Dorsolateral prefrontal cortex (tissue), 120 donors: ENCODE measurements at regions of chr2 and their contacts with region 1.

Region 1: GRCh38 chr2:168107322-168107721 is 140.1 kb downstream of the STK39 start:
- DNase-seq: no peak
- H3K4me3 ChIP-seq: no peak overlapping the region
- H3K27ac ChIP-seq: no peak overlapping the region
- H3K27me3 ChIP-seq: no peaks in the 10 kb centered on the region
- CTCF ChIP-seq: no peak

Region 2: DNA sequence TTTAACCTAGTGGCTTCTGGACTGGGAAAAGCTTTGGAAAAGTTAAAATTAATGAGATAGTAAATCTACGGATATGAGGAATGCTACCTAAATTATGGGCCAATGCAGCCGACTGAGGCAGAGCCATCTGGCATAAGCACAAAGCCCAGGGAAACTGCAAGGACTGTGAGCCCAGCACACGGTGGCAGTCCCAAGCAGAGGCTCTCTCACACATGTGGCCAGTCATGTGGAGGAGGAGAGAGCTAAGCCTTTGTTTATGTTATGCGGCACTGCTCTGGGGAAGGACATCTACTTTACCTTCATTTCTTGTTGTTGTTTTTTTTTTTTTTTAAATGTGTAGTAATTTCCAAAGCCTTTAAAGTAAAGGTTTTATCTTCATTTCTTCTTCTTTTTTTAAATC is 126.9 kb before region 1 on chr2:
- intact Hi-C with region 1: loop called in 1 of 2 experiments (anchors 5 kb)
- DNase-seq: peak in 1 of 10 donors; percentile 33
- H3K4me3 ChIP-seq: no peak overlapping the region
- H3K27ac ChIP-seq: no peak overlapping the region
- H3K27me3 ChIP-seq: no peaks in the 10 kb centered on the region
- CTCF ChIP-seq: no peak

Region 3: GRCh38 chr2:168300460-168300859 is 193.1 kb after region 1 on chr2:
- intact Hi-C with region 1: no loop called
- DNase-seq: no peak
- H3K4me3 ChIP-seq: no peak overlapping the region
- H3K27ac ChIP-seq: no peak overlapping the region
- H3K27me3 ChIP-seq: no peaks in the 10 kb centered on the region
- CTCF ChIP-seq: no peak